ENCODE measurements at regions of chr15 and their contacts with region 1.

Region 1: GRCh38 chr15:72168111-72168808 is 29.3 kb downstream of the GRAMD2A start:
- DNase-seq: peak; percentile 84 to 97
- H3K4me3 ChIP-seq: peak overlapping the region; percentile 66
- H3K27ac ChIP-seq: peak overlapping the region; percentile 96
- H3K4me1 ChIP-seq: peaks cover 51% of the 10 kb centered on the region
- H3K27me3 ChIP-seq: no peaks in the 10 kb centered on the region
- CTCF ChIP-seq: no peak

Region 2: GRCh38 chr15:71011503-71012155 is 1156.6 kb before region 1 on chr15:
- CTCF ChIA-PET with region 1: no interaction called
- POLR2A ChIA-PET with region 1: no interaction called
- intact Hi-C with region 1: no loop called
- DNase-seq: peak in 1 of 2 experiments; percentile 21
- H3K4me3 ChIP-seq: no peak overlapping the region
- H3K27ac ChIP-seq: no peak overlapping the region
- H3K4me1 ChIP-seq: no peaks in the 10 kb centered on the region
- H3K27me3 ChIP-seq: no peaks in the 10 kb centered on the region
- CTCF ChIP-seq: peak; percentile 83

Region 3: GRCh38 chr15:72117486-72118399 is 50.5 kb before region 1 on chr15 and contains the start of gene MYO9A:
- CTCF ChIA-PET with region 1: no interaction called
- POLR2A ChIA-PET with region 1: interaction called, 13 read pairs
- intact Hi-C with region 1: no loop called
- DNase-seq: peak; percentile 87 to 97
- H3K4me3 ChIP-seq: peak within 1 kb of the TSS; percentile 73
- H3K27ac ChIP-seq: peak within 1 kb of the TSS; percentile 72
- H3K4me1 ChIP-seq: peaks cover 15% of the 10 kb centered on the region; the same call in 1 of the 2 replicates
- H3K27me3 ChIP-seq: no peaks in the 10 kb centered on the region
- CTCF ChIP-seq: no peak
- total RNA-seq, gene MYO9A: 34.0 and 37.3 TPM in 2 replicates

Region 4: GRCh38 chr15:72184165-72184889 is 16.1 kb after region 1 on chr15:
- CTCF ChIA-PET with region 1: no interaction called
- POLR2A ChIA-PET with region 1: interaction called, 11 read pairs
- intact Hi-C with region 1: loop called (anchors 1 kb)
- DNase-seq: peak; percentile 79 to 89
- H3K4me3 ChIP-seq: peak overlapping the region; percentile 55
- H3K27ac ChIP-seq: peak overlapping the region; percentile 72
- H3K4me1 ChIP-seq: peaks cover 61% of the 10 kb centered on the region
- H3K27me3 ChIP-seq: no peaks in the 10 kb centered on the region
- CTCF ChIP-seq: no peak

Region 5: GRCh38 chr15:72231066-72231846 is 63.0 kb after region 1 on chr15 and contains the start of gene PKM:
- CTCF ChIA-PET with region 1: interaction called, 7 read pairs
- POLR2A ChIA-PET with region 1: interaction called, 10 read pairs
- intact Hi-C with region 1: loop called (anchors 1 kb)
- DNase-seq: peak; percentile 91 to 99
- H3K4me3 ChIP-seq: peak within 1 kb of the TSS; percentile 70
- H3K27ac ChIP-seq: peak within 1 kb of the TSS; percentile 88
- H3K4me1 ChIP-seq: peaks cover 57% of the 10 kb centered on the region
- H3K27me3 ChIP-seq: no peaks in the 10 kb centered on the region
- CTCF ChIP-seq: no peak
- total RNA-seq, gene PKM: 1,294 and 1,809 TPM in 2 replicates

Measured in PC-9 (cell line).